ENCODE measurements at regions of chr21 and their contacts with region 1.

Region 1: GRCh38 chr21:43659136-43660000 is at the starts of genes HSF2BP and RRP1B:
- DNase-seq: peak; percentile 74 to 84
- H3K4me3 ChIP-seq: peak within 1 kb of the TSS; percentile 84
- H3K4me1 ChIP-seq: peaks cover 6% of the 10 kb centered on the region
- H3K27me3 ChIP-seq: no peaks in the 10 kb centered on the region

Region 2: DNA sequence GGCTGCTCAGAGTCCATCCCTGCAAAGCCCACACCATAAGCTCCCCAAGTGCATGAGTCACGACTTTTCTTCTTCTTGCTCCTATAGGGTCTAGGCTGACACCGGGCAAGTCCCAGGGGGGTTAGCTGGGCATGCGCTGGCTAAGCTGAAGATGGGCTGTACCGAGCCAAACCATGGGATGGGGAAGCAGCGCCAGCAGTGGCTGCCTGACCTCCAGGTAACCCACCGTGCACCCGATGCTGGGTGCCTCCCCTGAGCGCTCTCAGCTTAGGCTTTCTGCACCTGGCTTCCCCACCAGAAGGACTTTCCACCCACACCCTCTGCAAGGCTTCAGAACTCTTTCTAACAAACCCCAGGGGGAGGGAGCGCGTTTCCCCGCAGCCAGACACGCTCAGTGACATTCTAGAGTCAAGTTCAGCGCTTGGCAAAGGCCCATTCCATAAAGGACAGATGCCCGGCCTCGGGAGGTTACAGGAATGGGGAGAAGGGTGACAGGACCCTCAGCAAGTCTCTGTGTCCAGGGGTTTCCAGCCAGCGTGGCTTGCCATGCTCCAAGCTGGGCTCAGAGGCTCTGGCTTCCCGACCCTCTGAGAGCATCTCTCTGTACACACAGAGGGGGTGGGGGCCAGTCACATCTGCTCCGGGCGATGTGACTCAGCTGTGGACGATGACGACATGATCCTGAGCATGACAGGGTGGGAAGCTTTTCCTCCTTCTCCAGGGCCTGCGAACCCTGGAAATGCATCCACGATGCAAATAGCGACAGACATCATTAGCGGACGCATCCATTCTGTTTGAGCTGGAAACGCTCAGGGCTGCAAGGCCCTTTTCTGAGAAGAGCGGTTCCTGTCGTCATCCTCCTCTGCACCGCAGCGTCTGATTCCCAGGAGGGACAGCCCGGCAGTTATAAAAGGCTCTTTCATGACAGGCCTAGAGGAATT is 340.3 kb before region 1 on chr21:
- in situ Hi-C with region 1: loop called (anchors 10 kb)
- DNase-seq: no peak
- H3K4me3 ChIP-seq: no peak overlapping the region
- H3K4me1 ChIP-seq: no peaks in the 10 kb centered on the region
- H3K27me3 ChIP-seq: no peaks in the 10 kb centered on the region

Region 3: GRCh38 chr21:43712308-43712974 is 53.1 kb after region 1 on chr21:
- in situ Hi-C with region 1: no loop called
- DNase-seq: no peak
- H3K4me3 ChIP-seq: no peak overlapping the region
- H3K4me1 ChIP-seq: no peaks in the 10 kb centered on the region
- H3K27me3 ChIP-seq: peaks cover 2% of the 10 kb centered on the region; the same call in 1 of the 2 replicates